Ascending aorta (tissue), 2 donors: ENCODE measurements at regions of chr6 and their contacts with region 1.

Region 1: DNA sequence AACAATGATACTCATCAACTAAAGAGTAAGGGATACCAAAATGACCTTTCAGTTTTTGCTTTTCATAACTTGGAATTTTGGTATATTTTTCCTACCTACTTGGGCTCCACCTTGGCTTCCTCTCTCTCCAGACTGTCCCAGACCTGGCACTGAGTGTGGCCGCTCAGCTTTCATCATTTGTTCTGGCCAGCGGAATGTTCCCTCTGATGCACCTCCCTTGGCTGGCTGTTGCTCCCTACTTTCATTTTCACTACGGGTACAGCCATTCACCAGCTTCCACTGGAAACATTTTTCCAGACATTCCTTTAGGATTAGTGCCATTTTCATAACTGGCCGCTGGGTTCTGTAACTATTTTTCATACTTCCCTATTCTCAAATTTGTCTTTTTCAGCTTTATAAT is 487.4 kb downstream of the TENT5A start:
- DNase-seq: peak in 1 of 2 donors; percentile 80
- H3K4me3 ChIP-seq: peak overlapping the region; percentile 43 to 57
- H3K27ac ChIP-seq: peak overlapping the region; percentile 68 to 69
- H3K4me1 ChIP-seq: peaks cover 0 to 2% of the 10 kb centered on the region in 2 donors
- H3K27me3 ChIP-seq: no peaks in the 10 kb centered on the region
- CTCF ChIP-seq: no peak

Region 2: GRCh38 chr6:81172056-81172740 is 92.9 kb before region 1 on chr6:
- intact Hi-C with region 1: loop called (anchors 5 kb)
- DNase-seq: peak in 1 of 2 donors; percentile 81
- H3K4me3 ChIP-seq: no peak overlapping the region
- H3K27ac ChIP-seq: peak overlapping the region; percentile 72 to 78
- H3K4me1 ChIP-seq: peaks cover 0 to 29% of the 10 kb centered on the region in 2 donors
- H3K27me3 ChIP-seq: no peaks in the 10 kb centered on the region
- CTCF ChIP-seq: no peak

Region 3: GRCh38 chr6:81226957-81227356 is 38.1 kb before region 1 on chr6:
- intact Hi-C with region 1: no loop called
- DNase-seq: no peak
- H3K4me3 ChIP-seq: no peak overlapping the region
- H3K27ac ChIP-seq: no peak overlapping the region
- H3K4me1 ChIP-seq: no peaks in the 10 kb centered on the region
- H3K27me3 ChIP-seq: no peaks in the 10 kb centered on the region
- CTCF ChIP-seq: no peak

Region 4: GRCh38 chr6:81401970-81402690 is 137.0 kb after region 1 on chr6:
- intact Hi-C with region 1: loop called (anchors 2 kb)
- DNase-seq: no peak
- H3K4me3 ChIP-seq: peak overlapping the region in 1 of 2 donors; percentile 6
- H3K27ac ChIP-seq: peak overlapping the region; percentile 76 to 79
- H3K4me1 ChIP-seq: peaks cover 0 to 15% of the 10 kb centered on the region in 2 donors
- H3K27me3 ChIP-seq: no peaks in the 10 kb centered on the region
- CTCF ChIP-seq: no peak